ENCODE measurements at regions of chr21 and their contacts with region 1.

Region 1: DNA sequence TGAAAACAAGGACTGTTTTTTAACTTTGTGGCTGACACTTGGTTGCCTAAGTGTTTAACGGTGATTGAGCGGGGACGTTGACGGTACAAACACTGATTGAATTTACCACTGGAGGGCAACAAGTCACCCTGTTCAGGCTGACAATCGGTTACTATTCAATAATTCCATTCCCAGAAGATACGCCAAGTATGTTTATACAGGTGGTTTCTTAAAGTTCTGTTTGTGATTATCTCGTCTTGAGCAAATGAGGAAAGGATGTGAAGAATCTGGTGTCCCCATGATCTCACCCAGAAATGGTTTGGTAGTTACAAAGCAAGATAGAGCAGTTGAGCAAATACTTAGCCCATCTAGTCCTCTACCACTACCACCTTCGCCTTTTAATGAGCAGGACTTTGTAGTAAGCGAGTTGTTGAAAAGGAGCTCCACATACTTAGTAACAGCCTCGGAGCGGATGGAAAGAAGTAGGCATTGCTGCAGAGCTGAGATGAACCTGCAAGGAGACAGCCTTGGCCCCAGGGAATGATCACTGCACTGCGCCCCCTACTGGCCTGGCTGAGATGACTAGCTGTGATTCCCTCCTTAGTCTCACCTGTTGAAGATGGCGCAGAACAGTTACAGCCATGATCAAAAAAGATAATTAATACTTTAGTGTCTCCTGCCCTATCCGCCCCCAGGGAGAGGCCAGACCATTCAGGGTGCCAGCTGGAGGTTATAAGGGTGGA is 36.3 kb downstream of the IFNAR1 start:
- DNase-seq: peak; percentile 89
- ATAC-seq: peak; percentile 81
- H3K4me3 Mint-ChIP-seq: peak overlapping the region; percentile 75
- H3K27ac Mint-ChIP-seq: peak overlapping the region; percentile 48
- H3K4me1 Mint-ChIP-seq: peaks cover 27% of the 10 kb centered on the region
- H3K27me3 Mint-ChIP-seq: no peaks in the 10 kb centered on the region

Region 2: GRCh38 chr21:33205476-33205875 is 155.6 kb before region 1 on chr21:
- CTCF ChIA-PET with region 1: interaction called, 19 read pairs
- POLR2A ChIA-PET with region 1: interaction called, 4 read pairs
- DNase-seq: peak; percentile 73
- ATAC-seq: peak; percentile 68
- H3K4me3 Mint-ChIP-seq: peak overlapping the region; percentile 70
- H3K27ac Mint-ChIP-seq: peak overlapping the region; percentile 93
- H3K4me1 Mint-ChIP-seq: peaks cover 55% of the 10 kb centered on the region
- H3K27me3 Mint-ChIP-seq: no peaks in the 10 kb centered on the region

Region 3: GRCh38 chr21:33324291-33325221 is 36.5 kb before region 1 on chr21 and contains the start of gene IFNAR1:
- CTCF ChIA-PET with region 1: interaction called, 60 read pairs
- POLR2A ChIA-PET with region 1: interaction called, 16 read pairs
- DNase-seq: peak; percentile 100
- ATAC-seq: peak; percentile 96
- H3K4me3 Mint-ChIP-seq: no peak within 1 kb of the TSS
- H3K27ac Mint-ChIP-seq: no peak within 1 kb of the TSS
- H3K4me1 Mint-ChIP-seq: peaks cover 25% of the 10 kb centered on the region
- H3K27me3 Mint-ChIP-seq: peaks cover 2% of the 10 kb centered on the region
- total RNA-seq, gene IFNAR1: 32.5 to 35.4 TPM

Region 4: GRCh38 chr21:33339918-33340317 is 21.1 kb before region 1 on chr21:
- CTCF ChIA-PET with region 1: interaction called, 38 read pairs
- POLR2A ChIA-PET with region 1: no interaction called
- DNase-seq: no peak
- ATAC-seq: no peak
- H3K4me3 Mint-ChIP-seq: no peak overlapping the region
- H3K27ac Mint-ChIP-seq: no peak overlapping the region
- H3K4me1 Mint-ChIP-seq: peaks cover 2% of the 10 kb centered on the region
- H3K27me3 Mint-ChIP-seq: no peaks in the 10 kb centered on the region

Region 5: DNA sequence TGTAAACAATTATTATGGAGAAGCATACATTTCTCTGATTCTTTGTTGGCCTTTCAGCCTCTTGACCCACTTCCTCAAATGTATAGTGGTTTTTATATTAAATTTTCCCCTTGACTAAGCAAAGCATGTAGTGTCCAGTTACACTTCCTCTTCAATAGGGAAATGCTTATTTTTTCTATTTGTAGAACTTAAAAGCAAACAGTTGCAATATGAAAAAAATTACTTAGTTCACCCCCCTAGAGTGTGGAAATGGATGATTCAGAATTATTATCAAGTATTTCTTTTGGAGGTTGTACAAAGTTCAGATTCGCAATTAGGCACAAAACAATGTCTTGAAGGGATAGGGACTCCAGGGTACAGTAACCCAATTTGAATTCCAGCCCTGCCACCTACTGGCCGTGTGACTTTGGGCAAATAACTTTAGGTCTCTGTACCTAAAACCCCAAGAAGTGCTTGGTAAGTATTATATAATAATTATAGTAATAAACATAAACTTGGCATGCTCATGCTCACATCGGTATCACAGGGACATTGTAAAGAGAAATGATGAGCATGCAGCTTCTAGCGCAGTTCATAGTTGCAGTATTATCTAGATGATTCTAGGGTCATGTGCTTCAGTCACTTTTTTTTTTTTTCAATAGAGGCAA is 13.5 kb after region 1 on chr21:
- CTCF ChIA-PET with region 1: interaction called, 33 read pairs
- POLR2A ChIA-PET with region 1: interaction called, 4 read pairs
- DNase-seq: peak; percentile 72
- ATAC-seq: peak; percentile 71
- H3K4me3 Mint-ChIP-seq: no peak overlapping the region
- H3K27ac Mint-ChIP-seq: no peak overlapping the region
- H3K4me1 Mint-ChIP-seq: peaks cover 25% of the 10 kb centered on the region
- H3K27me3 Mint-ChIP-seq: peaks cover 24% of the 10 kb centered on the region

Region 6: GRCh38 chr21:33386222-33386784 is 25.3 kb after region 1 on chr21:
- CTCF ChIA-PET with region 1: interaction called, 36 read pairs
- POLR2A ChIA-PET with region 1: interaction called, 4 read pairs
- DNase-seq: no peak
- ATAC-seq: no peak
- H3K4me3 Mint-ChIP-seq: no peak overlapping the region
- H3K27ac Mint-ChIP-seq: no peak overlapping the region
- H3K4me1 Mint-ChIP-seq: peaks cover 47% of the 10 kb centered on the region
- H3K27me3 Mint-ChIP-seq: peaks cover 30% of the 10 kb centered on the region

Region 7: DNA sequence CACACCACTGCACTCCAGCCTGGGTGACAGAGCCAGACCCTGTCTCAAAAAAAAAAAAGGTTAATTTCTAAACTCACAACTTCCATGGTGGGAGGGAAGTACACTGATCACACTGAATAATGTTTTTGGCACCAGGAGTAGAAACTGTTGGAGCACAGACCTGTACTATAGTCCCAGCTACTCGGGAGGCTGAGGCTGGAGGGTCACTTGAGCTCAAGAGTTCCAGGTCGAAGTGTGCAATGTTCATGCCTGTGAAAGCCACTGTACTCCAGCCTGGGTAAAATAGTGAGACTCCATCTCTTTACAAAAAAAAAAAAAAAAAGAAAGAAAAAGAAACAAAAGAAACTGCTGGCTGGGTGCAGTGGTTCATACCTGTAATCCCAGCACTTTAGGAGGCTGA is 83.5 kb after region 1 on chr21:
- CTCF ChIA-PET with region 1: interaction called, 34 read pairs
- POLR2A ChIA-PET with region 1: no interaction called
- DNase-seq: no peak
- ATAC-seq: no peak
- H3K4me3 Mint-ChIP-seq: no peak overlapping the region
- H3K27ac Mint-ChIP-seq: no peak overlapping the region
- H3K4me1 Mint-ChIP-seq: peaks cover 5% of the 10 kb centered on the region
- H3K27me3 Mint-ChIP-seq: no peaks in the 10 kb centered on the region